A549 (cell line): ENCODE measurements at regions of chr9 and their contacts with region 1.

Region 1: GRCh38 chr9:126398403-126399058 is 71.9 kb downstream of the MVB12B start:
- DNase-seq: peak; percentile 51 to 80
- ATAC-seq: peak; percentile 88 to 96; a peak in 5 of 6 replicates
- H3K4me3 ChIP-seq: no peak overlapping the region
- H3K27ac ChIP-seq: no peak overlapping the region
- H3K4me1 ChIP-seq: peaks cover 10% of the 10 kb centered on the region
- CTCF ChIP-seq: peak; percentile 93
- EP300 ChIP-seq: no peak
- POLR2A ChIP-seq: no peak
- RAD21 ChIP-seq: peak; percentile 93 to 96

Region 2: DNA sequence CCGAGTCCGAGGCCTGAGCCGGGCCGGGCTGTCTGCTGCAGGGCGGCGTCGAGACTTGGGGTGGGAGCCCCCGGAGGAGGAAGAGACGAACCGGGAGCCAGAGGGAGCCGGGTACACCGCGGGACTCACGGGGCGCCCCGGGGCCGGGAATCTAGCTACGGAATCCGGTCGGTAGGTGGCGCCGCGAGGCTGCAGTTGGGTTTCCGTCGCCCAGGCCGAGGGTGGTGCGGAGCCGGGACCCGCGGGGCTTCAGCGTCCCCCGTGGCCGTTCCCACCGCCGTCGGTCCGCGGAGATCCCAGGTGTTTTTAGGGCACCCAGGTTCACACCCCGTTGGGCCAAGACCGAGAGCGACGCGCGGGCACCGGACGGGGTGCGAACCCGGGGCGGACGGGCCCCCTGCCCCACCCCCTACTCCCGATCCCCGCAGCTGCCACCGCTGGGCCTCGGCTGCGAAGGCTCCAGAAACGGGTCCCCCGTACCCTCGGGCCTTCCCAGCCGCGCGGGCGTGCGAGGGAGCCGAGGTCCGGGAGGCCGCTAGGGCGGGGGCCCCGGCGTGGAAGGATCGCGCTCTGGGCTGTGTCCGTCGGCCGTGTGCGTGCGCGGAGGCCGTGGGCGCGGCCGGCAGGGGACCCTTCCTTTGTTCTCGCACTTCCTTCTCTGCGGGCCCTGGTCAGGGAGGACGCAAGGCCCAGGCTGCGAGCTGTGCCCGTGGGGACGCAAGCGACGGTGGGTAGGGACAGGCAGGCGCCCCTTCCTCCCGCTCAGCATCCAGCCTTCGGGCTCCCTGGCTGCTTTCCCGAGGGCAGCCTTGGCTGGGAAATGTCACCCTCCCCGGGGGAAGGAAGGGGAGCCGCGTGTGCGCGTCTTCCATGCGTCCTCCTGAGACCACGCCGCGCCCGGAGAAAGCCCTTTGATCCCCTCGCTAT is 990.3 kb before region 1 on chr9:
- CTCF ChIA-PET with region 1: interaction called, 32 read pairs
- POLR2A ChIA-PET with region 1: interaction called, 4 read pairs
- DNase-seq: peak; percentile 74 to 96
- ATAC-seq: peak; percentile 79 to 92
- H3K4me3 ChIP-seq: peak overlapping the region; percentile 85
- H3K27ac ChIP-seq: peak overlapping the region; percentile 88
- H3K4me1 ChIP-seq: 0 out of 3 replicates have a peak, but pooled peaks cover 4% of the 10 kb centered on the region
- CTCF ChIP-seq: peak; percentile 94
- EP300 ChIP-seq: no peak
- POLR2A ChIP-seq: no peak
- RAD21 ChIP-seq: peak; percentile 93 to 98

Region 3: GRCh38 chr9:125902214-125902613 is 496.3 kb before region 1 on chr9:
- CTCF ChIA-PET with region 1: no interaction called
- POLR2A ChIA-PET with region 1: no interaction called
- DNase-seq: no peak
- ATAC-seq: no peak
- H3K4me3 ChIP-seq: no peak overlapping the region
- H3K27ac ChIP-seq: no peak overlapping the region
- H3K4me1 ChIP-seq: peaks cover 9% of the 10 kb centered on the region; the same call in 2 of the 3 replicates
- CTCF ChIP-seq: no peak
- EP300 ChIP-seq: no peak
- POLR2A ChIP-seq: no peak
- RAD21 ChIP-seq: no peak

Region 4: GRCh38 chr9:126316085-126316655 is 82.4 kb before region 1 on chr9:
- CTCF ChIA-PET with region 1: interaction called, 13 read pairs
- POLR2A ChIA-PET with region 1: no interaction called
- DNase-seq: no peak
- ATAC-seq: no peak
- H3K4me3 ChIP-seq: no peak overlapping the region
- H3K27ac ChIP-seq: no peak overlapping the region
- H3K4me1 ChIP-seq: no peaks in the 10 kb centered on the region
- CTCF ChIP-seq: no peak
- EP300 ChIP-seq: no peak
- POLR2A ChIP-seq: no peak
- RAD21 ChIP-seq: no peak

Region 5: GRCh38 chr9:126347911-126348760 is 50.4 kb before region 1 on chr9:
- CTCF ChIA-PET with region 1: interaction called, 12 read pairs
- POLR2A ChIA-PET with region 1: no interaction called
- DNase-seq: no peak
- ATAC-seq: no peak
- H3K4me3 ChIP-seq: no peak overlapping the region
- H3K27ac ChIP-seq: no peak overlapping the region
- H3K4me1 ChIP-seq: no peaks in the 10 kb centered on the region
- CTCF ChIP-seq: no peak
- EP300 ChIP-seq: no peak
- POLR2A ChIP-seq: no peak
- RAD21 ChIP-seq: no peak

Region 6: DNA sequence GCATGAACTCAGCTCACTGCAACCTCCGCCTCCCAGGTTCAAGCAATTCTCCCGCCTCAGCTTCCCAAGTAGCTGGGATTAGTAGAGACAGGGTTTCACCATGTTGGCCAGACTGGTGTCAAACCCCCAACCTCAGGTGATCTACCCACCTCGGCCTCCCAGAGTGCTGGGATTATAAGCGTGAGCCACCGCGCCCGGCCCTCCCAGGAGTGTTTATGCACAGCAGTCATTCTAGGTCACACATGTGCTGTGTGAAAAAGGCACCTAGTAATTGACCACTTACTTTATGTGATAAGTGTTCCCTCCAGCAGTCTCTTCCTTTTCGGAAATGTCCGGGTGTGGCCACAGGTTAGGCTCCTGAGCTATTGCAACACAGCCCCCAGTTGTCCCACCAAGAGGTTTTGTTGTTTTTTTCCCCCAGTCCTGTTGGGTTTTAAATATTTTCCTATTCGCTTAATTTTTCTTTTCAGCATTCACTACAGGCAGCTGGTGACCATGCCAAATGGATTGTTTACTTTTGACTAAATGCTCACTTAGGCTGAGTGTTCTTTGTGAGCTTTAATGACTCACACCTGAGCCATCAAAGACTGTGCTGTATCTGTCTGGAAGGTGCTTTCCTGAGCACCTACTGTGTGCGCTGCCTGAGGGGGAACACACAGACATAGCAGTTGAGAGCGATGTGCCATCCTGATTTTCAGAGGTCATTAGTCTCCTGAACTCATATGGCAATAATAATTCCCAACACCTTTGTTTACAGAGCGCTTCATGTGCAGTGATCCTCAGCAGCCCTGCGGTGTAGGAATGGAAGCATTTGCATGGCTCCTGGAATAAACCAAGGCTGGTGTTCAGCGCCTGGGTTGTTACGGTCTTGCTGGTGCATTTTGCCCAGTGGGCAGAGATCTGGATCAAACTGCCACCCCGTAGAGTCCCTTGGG is 22.4 kb after region 1 on chr9:
- CTCF ChIA-PET with region 1: interaction called, 40 read pairs
- POLR2A ChIA-PET with region 1: no interaction called
- DNase-seq: peak; percentile 35 to 55
- ATAC-seq: peak; percentile 80 to 81; a peak in 5 of 6 replicates
- H3K4me3 ChIP-seq: no peak overlapping the region
- H3K27ac ChIP-seq: peak overlapping the region; percentile 29 to 70; a peak in 4 of 6 replicates
- H3K4me1 ChIP-seq: peaks cover 31% of the 10 kb centered on the region
- CTCF ChIP-seq: no peak
- EP300 ChIP-seq: no peak
- POLR2A ChIP-seq: no peak
- RAD21 ChIP-seq: no peak

Region 7: GRCh38 chr9:126482361-126483044 is 84.0 kb after region 1 on chr9:
- CTCF ChIA-PET with region 1: interaction called, 10 read pairs
- POLR2A ChIA-PET with region 1: no interaction called
- DNase-seq: no peak
- ATAC-seq: no peak
- H3K4me3 ChIP-seq: no peak overlapping the region
- H3K27ac ChIP-seq: no peak overlapping the region
- H3K4me1 ChIP-seq: no peaks in the 10 kb centered on the region
- CTCF ChIP-seq: no peak
- EP300 ChIP-seq: no peak
- POLR2A ChIP-seq: no peak
- RAD21 ChIP-seq: no peak